Activated naive CD4-positive, alpha-beta T cell treated with anti-CD3 and anti-CD28 coated beads for 36 hours (primary cell): ENCODE measurements at regions of chr10 and their contacts with region 1.

Region 1: GRCh38 chr10:35090162-35090954 is at the start of gene CUL2:
- DNase-seq: peak; percentile 94
- H3K4me3 Mint-ChIP-seq: peak within 1 kb of the TSS; percentile 90
- H3K27ac Mint-ChIP-seq: peak within 1 kb of the TSS; percentile 92
- H3K4me1 Mint-ChIP-seq: peaks cover 45% of the 10 kb centered on the region
- H3K27me3 Mint-ChIP-seq: no peaks in the 10 kb centered on the region
- total RNA-seq, gene CUL2: 35.3 to 36.9 TPM

Region 2: GRCh38 chr10:34780818-34781380 is 309.5 kb before region 1 on chr10:
- CTCF ChIA-PET with region 1: no interaction called
- intact Hi-C with region 1: no loop called
- DNase-seq: peak; percentile 9
- H3K4me3 Mint-ChIP-seq: peak overlapping the region; percentile 2
- H3K27ac Mint-ChIP-seq: no peak overlapping the region
- H3K4me1 Mint-ChIP-seq: peaks cover 10% of the 10 kb centered on the region
- H3K27me3 Mint-ChIP-seq: peaks cover 24% of the 10 kb centered on the region

Region 3: DNA sequence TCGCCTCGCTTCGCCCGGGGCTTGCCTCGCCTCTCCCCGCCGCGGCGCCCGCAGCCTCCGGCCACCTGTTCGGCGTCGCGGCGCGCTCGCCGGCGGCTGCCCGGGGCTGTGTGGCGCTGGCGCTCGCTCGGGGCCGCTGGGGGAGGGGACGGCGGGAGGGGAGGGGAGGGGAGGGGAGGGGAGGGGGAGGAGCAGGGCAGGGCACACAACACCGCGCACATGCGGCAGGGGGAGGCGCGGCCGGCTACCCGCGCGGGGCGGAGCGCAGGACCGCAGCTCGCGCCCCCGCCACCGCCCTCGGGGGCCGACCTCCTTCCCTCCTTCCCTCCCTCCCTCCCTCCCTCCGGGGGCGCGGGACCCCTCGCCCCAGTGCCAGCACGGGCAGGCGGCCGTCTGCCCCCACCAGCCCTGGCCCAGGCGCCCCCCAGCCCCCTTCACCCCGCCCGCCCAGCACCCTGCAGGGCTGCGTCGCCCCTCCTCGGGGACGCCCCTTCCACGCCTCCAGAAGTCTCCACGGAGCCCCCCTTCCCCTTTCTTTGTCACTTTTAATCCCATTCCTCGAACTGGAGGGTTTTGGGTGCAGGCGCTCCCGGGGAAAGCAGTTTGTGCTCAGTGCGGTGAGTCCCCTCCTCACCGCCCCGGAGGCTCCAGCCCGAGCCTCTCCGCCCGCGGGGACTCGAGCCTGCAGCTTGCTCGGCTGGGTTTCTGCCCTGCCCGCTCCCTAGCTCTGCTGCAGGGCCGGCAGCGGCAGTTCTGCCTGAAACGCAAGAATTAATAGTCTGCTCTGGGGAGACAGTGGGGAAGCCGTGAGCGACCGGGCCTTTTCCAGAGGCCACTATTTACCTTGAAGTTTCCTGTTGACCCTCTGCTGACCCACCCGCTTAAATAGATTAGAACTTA is 274.9 kb before region 1 on chr10 and contains the start of gene PARD3:
- CTCF ChIA-PET with region 1: no interaction called
- intact Hi-C with region 1: loop called (anchors 10 kb)
- DNase-seq: peak; percentile 40
- H3K4me3 Mint-ChIP-seq: peak within 1 kb of the TSS; percentile 59
- H3K27ac Mint-ChIP-seq: no peak within 1 kb of the TSS
- H3K4me1 Mint-ChIP-seq: peaks cover 6% of the 10 kb centered on the region
- H3K27me3 Mint-ChIP-seq: peaks cover 49% of the 10 kb centered on the region
- total RNA-seq, gene PARD3: 3.6 to 4.0 TPM

Region 4: DNA sequence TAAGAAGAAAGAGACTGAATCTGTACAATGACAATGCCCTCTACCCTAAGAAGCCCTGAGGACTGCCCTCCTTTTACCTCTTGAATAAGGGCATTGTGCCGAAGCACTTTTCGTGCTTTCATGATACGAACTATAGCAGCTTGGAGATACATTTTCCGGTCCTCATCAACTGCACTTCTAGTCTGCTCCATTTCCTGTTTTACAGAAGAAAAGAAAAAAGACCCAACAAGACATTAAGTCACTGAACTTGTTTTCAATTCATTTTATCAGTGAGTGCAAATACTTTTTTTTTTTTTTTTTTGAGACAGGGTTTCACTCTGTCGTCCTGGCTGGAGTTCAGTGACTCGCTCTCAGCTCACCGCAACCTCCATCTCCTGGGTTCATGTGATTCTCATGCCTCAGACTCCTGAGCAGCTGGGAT is 78.6 kb before region 1 on chr10:
- CTCF ChIA-PET with region 1: no interaction called
- intact Hi-C with region 1: loop called (anchors 5 kb)
- DNase-seq: peak; percentile 37
- H3K4me3 Mint-ChIP-seq: peak overlapping the region; percentile 15
- H3K27ac Mint-ChIP-seq: peak overlapping the region; percentile 50
- H3K4me1 Mint-ChIP-seq: peaks cover 21% of the 10 kb centered on the region
- H3K27me3 Mint-ChIP-seq: no peaks in the 10 kb centered on the region

Region 5: DNA sequence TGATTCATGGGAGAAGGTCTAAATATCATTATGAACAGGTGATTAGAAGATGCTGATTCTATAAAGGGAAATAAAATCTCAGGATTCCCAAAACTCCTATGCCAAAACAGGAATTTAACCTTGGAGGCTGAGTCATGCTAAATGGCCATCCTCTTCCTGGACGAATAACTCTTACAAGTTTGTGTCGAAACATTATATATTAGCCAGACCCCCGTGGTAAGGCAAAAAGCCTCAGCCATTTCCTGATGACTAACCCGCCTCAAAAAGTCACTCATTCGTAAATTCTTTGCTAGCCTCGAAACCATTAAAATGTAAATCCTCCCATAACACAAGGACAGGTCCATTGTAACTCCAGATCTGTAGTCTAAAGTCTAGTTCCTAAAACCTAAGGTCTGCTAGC is 32.2 kb before region 1 on chr10:
- CTCF ChIA-PET with region 1: no interaction called
- intact Hi-C with region 1: no loop called
- DNase-seq: no peak
- H3K4me3 Mint-ChIP-seq: no peak overlapping the region
- H3K27ac Mint-ChIP-seq: no peak overlapping the region
- H3K4me1 Mint-ChIP-seq: peaks cover 3% of the 10 kb centered on the region
- H3K27me3 Mint-ChIP-seq: no peaks in the 10 kb centered on the region

Region 6: GRCh38 chr10:35218339-35218955 is 128.1 kb after region 1 on chr10:
- CTCF ChIA-PET with region 1: interaction called, 5 read pairs
- intact Hi-C with region 1: loop called (anchors 1 kb)
- DNase-seq: peak; percentile 96
- H3K4me3 Mint-ChIP-seq: peak overlapping the region; percentile 47
- H3K27ac Mint-ChIP-seq: peak overlapping the region; percentile 74
- H3K4me1 Mint-ChIP-seq: peaks cover 32% of the 10 kb centered on the region
- H3K27me3 Mint-ChIP-seq: no peaks in the 10 kb centered on the region